Sigmoid colon (tissue), 7 donors: ENCODE measurements at regions of chr2 and their contacts with region 1.

Region 1: GRCh38 chr2:98731041-98731893 is at the start of gene MGAT4A:
- DNase-seq: peak; percentile 90
- H3K4me3 ChIP-seq: peak within 1 kb of the TSS; percentile 64 to 94 (median 90)
- H3K27ac ChIP-seq: peak within 1 kb of the TSS; percentile 88 to 93 (median 90)
- H3K4me1 ChIP-seq: peaks cover 0 to 35% (median 33%) of the 10 kb centered on the region in 4 donors
- H3K27me3 ChIP-seq: no peaks in the 10 kb centered on the region
- CTCF ChIP-seq: no peak
- EP300 ChIP-seq: no peak
- POLR2A ChIP-seq: no peak
- total RNA-seq, gene MGAT4A: 9.5 to 28.2 (median 16.9) TPM

Region 2: GRCh38 chr2:98615481-98615880 is 115.8 kb before region 1 on chr2:
- intact Hi-C with region 1: no loop called
- DNase-seq: no peak
- H3K4me3 ChIP-seq: no peak overlapping the region
- H3K27ac ChIP-seq: no peak overlapping the region
- H3K4me1 ChIP-seq: peaks cover 0 to 16% (median 14%) of the 10 kb centered on the region in 4 donors
- H3K27me3 ChIP-seq: no peaks in the 10 kb centered on the region
- CTCF ChIP-seq: no peak
- EP300 ChIP-seq: no peak
- POLR2A ChIP-seq: no peak

Region 3: DNA sequence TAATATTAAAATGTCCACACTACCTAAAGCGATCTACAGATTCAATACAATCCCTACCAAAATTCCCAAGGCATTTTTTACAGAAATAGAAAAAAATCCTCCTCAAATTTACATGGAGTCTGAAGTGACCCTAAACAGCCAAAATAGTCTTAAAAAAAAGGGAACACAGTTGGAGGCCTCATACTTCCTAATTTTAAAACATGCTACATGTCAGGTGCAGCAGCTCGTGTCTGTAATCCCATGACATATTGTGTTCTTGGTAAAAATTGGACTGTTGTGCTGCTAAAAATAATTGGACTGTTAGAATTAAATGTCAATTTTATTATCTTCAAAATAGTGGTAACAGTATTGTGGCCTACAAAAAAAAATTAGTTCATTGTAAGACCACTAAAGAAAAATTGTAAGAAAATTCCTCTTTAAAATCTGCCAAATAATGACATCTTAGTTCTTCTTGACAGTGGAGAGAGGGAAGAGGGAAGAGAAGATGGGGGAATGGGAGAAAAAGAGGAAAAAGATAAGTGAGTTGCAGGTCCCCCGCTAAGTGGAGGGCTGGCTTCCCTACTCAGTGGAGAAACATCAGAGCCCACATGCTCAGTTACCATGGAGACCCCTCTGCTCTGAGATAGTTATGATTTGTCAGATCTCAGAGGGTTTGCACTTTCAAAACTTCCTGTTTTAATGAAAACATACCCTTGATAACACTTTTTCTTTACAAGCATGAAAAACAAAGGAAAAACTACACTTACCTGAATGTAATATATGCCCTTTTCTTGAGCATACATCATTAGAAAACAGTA is 76.4 kb before region 1 on chr2:
- intact Hi-C with region 1: loop called (anchors 5 kb)
- DNase-seq: no peak
- H3K4me3 ChIP-seq: no peak overlapping the region
- H3K27ac ChIP-seq: peak overlapping the region in 1 of 4 donors; percentile 16
- H3K4me1 ChIP-seq: no peaks in the 10 kb centered on the region
- H3K27me3 ChIP-seq: no peaks in the 10 kb centered on the region
- CTCF ChIP-seq: no peak
- EP300 ChIP-seq: no peak
- POLR2A ChIP-seq: no peak

Region 4: GRCh38 chr2:98676742-98677141 is 54.5 kb before region 1 on chr2:
- intact Hi-C with region 1: no loop called
- DNase-seq: no peak
- H3K4me3 ChIP-seq: no peak overlapping the region
- H3K27ac ChIP-seq: no peak overlapping the region
- H3K4me1 ChIP-seq: no peaks in the 10 kb centered on the region
- H3K27me3 ChIP-seq: no peaks in the 10 kb centered on the region
- CTCF ChIP-seq: no peak
- EP300 ChIP-seq: no peak
- POLR2A ChIP-seq: no peak

Region 5: GRCh38 chr2:98822301-98823164 is 91.3 kb after region 1 on chr2:
- intact Hi-C with region 1: loop called (anchors 2 kb)
- DNase-seq: no peak
- H3K4me3 ChIP-seq: peak overlapping the region; percentile 7 to 54 (median 46)
- H3K27ac ChIP-seq: peak overlapping the region; percentile 52 to 66 (median 56)
- H3K4me1 ChIP-seq: peaks cover 0 to 16% (median 11%) of the 10 kb centered on the region in 4 donors
- H3K27me3 ChIP-seq: peaks cover 12 to 19% (median 19%) of the 10 kb centered on the region in 3 donors
- CTCF ChIP-seq: peak in 1 of 4 experiments; percentile 11
- EP300 ChIP-seq: no peak
- POLR2A ChIP-seq: no peak